Uterus (tissue), 4 donors: ENCODE measurements at regions of chr2 and their contacts with region 1.

Region 1: DNA sequence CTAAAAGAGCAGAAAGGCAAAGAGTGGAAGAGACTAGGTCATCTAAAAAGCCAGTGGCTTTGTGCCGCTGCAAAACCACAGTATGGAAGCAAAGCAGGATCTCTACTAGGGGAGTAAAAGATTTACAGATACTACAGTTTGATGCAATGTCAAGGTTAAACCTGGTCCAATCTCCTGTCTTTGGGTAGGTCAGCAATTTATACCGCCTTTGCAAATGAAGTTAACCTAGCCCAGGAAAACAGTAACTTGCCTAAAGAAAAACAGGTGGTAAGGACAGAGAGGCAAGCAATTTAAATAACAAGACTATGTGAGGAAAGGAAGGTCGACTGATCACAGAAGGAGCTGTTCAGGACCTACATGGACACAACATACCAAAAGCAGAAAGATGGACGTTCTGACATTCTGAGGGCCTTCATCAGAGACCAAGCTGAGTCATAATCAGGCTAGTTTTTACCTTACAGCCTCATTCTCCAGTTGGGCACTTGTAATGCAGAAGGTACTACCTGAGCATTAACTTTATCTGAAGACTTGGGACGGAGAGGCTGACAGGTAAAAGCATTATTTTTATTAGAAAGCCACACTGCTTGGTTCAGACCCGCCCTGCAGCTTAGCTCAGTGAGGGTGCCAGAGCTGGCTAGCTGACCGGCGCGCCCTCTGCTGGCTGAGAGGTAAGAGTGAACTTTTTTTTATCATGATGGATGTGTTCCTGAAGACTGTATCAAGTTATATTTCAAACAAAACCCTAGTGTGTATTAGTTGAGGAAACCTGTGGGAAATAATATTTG is 15.9 kb downstream of the CDKL4 start:
- DNase-seq: peak; percentile 73 to 74
- H3K4me3 ChIP-seq: no peak overlapping the region
- H3K27ac ChIP-seq: no peak overlapping the region
- H3K4me1 ChIP-seq: no peaks in the 10 kb centered on the region
- H3K27me3 ChIP-seq: no peaks in the 10 kb centered on the region
- CTCF ChIP-seq: peak; percentile 73 to 90 (median 82)
- POLR2A ChIP-seq: no peak

Region 2: DNA sequence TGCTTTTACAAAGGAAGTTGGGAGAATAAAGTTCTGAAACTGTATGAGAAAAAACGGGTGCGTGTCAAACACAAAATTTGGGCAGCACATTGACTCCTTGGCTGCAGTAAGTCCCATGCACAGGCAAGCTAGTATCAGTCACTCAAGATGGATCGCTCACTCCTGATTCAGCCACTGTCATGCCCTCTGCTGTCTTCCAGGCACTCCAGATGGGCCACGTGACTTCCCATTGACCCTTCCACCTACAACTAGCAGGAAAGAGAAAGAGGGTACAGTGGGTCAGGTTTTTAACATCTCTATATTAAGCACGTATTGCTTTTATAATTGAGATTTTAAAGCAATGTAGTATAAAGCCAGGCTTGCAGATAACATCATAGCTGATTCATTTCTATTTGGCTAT is 329.6 kb before region 1 on chr2:
- intact Hi-C with region 1: no loop called
- DNase-seq: no peak
- H3K4me3 ChIP-seq: no peak overlapping the region
- H3K27ac ChIP-seq: no peak overlapping the region
- H3K4me1 ChIP-seq: no peaks in the 10 kb centered on the region
- H3K27me3 ChIP-seq: no peaks in the 10 kb centered on the region
- CTCF ChIP-seq: no peak
- POLR2A ChIP-seq: no peak

Region 3: DNA sequence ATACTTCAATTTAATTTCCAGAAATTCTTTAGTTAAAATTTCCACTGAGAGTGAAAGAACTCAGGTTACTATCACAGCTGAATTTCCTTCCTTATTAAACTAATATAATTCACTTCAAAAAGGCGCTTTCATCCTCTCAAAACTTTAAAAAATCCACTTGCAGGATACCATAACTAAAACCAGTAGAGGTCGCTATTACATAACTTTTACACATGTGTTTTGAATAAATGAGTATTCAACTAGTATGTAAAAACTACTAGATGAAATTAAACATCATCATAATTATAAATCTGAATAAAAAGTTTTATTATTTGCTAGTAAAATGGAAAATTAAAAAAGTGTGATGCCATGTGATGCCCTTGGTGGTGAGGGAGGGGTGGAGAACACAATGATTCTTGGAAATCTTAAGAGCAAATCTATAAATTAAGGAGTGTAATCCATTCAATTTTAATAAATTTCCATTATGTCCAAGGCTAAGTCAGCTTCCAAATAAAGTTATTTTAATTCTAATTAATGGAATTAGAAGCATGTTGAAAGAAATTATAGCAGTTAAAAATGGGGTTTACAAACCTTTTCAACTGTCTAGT is 168.4 kb before region 1 on chr2:
- intact Hi-C with region 1: loop called (anchors 5 kb)
- DNase-seq: no peak
- H3K4me3 ChIP-seq: no peak overlapping the region
- H3K27ac ChIP-seq: no peak overlapping the region
- H3K4me1 ChIP-seq: no peaks in the 10 kb centered on the region
- H3K27me3 ChIP-seq: no peaks in the 10 kb centered on the region
- CTCF ChIP-seq: peak; percentile 58 to 77 (median 64)
- POLR2A ChIP-seq: no peak